Mammary epithelial cell (primary cell): ENCODE measurements at regions of chr21 and their contacts with region 1.

Region 1: GRCh38 chr21:38669176-38669575 is 136.6 kb upstream of the ETS2 start:
- DNase-seq: peak; percentile 20
- H3K4me3 ChIP-seq: no peak overlapping the region
- H3K27ac ChIP-seq: no peak overlapping the region
- H3K4me1 ChIP-seq: no peaks in the 10 kb centered on the region
- H3K27me3 ChIP-seq: no peaks in the 10 kb centered on the region
- CTCF ChIP-seq: peak; percentile 54 to 71

Region 2: DNA sequence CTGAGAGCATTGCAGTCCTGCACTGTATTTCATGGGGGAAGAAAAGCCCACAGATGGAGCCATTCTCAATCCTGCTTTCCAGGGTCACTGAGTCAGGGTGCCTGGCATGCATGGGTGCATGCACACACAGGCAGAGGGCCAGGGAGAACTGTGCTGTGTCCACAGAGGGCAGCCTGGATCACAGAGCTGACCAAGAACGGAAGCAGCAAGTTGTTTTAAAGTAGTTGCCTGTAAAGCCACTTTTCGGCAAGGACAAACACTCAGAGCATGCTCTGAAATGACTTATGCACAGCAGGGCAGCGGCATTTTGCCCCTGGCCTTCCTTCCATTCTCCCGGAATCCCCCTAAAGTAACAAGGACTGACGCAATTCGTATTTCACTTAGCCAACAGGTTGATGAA is 174.5 kb before region 1 on chr21:
- CTCF ChIA-PET with region 1: no interaction called
- dilution Hi-C with region 1: no loop called
- in situ Hi-C with region 1: no loop called
- intact Hi-C with region 1: no loop called
- DNase-seq: no peak
- H3K4me3 ChIP-seq: no peak overlapping the region
- H3K27ac ChIP-seq: no peak overlapping the region
- H3K4me1 ChIP-seq: peaks cover 6% of the 10 kb centered on the region
- H3K27me3 ChIP-seq: no peaks in the 10 kb centered on the region
- CTCF ChIP-seq: no peak

Region 3: GRCh38 chr21:38520511-38520910 is 148.7 kb before region 1 on chr21:
- CTCF ChIA-PET with region 1: no interaction called
- dilution Hi-C with region 1: no loop called
- in situ Hi-C with region 1: no loop called
- intact Hi-C with region 1: no loop called
- DNase-seq: no peak
- H3K4me3 ChIP-seq: no peak overlapping the region
- H3K27ac ChIP-seq: no peak overlapping the region
- H3K4me1 ChIP-seq: no peaks in the 10 kb centered on the region
- H3K27me3 ChIP-seq: peaks cover 6% of the 10 kb centered on the region
- CTCF ChIP-seq: no peak

Region 4: DNA sequence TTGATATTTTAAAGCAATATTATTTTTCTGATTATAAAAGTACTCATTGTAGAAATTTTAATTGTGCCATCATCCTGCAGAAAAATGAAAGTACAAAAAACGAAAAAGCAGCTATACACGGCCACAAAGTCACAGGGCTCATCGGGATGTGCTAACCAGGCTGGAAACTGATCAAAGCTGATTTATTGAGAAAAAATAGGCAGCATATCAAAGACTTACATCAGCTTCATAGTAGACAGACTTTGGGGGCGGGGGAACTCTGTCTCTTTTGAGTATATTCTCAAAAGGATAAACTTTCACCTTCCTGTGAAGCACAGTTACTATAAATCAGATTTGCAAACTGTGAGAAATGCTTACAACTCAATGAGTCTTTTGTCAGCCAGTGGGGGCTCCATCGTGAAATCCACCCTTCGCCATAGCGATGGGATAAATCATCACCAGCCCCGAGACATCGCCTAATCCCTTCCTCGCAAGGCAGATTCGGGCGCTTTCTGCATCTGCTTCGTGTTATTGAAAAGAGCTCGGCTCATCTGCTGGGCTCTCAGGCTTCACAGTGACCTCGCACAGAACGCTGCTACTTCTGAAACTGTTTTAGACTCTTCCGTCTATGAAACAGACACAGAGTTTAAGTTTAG is 101.7 kb before region 1 on chr21:
- CTCF ChIA-PET with region 1: no interaction called
- dilution Hi-C with region 1: loop called (anchors 5 kb)
- in situ Hi-C with region 1: no loop called
- intact Hi-C with region 1: no loop called
- DNase-seq: no peak
- H3K4me3 ChIP-seq: no peak overlapping the region
- H3K27ac ChIP-seq: no peak overlapping the region
- H3K4me1 ChIP-seq: no peaks in the 10 kb centered on the region
- H3K27me3 ChIP-seq: no peaks in the 10 kb centered on the region
- CTCF ChIP-seq: no peak

Region 5: DNA sequence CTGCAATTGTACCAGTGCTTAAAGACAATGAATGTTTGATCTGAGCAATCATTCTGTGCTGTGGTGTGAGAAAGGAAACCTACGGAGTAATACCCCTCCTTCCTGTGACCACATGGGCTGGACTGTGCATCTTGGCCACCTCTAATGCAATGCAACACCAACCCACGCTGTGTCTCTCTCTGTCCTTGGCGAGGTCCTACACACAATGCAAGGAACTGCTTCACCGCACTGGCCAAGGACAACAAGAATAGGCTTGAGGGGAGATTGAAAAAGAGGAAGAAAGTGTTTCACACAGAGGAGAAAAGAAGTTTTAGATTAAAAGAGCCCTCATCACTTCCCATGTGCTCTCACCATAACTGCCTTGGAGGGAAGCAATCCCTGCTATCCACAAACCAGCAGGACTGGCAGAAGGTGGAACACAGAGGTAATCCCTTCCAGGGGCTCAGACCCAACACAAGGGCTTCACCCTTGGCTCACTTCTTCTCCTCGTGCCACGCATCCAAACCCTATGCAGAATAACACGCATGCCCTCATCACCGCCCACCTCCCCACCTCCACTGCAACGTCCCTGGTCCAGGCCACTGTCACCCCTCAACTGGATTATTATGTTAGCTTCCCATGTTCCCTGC is 58.4 kb before region 1 on chr21:
- CTCF ChIA-PET with region 1: no interaction called
- dilution Hi-C with region 1: no loop called
- in situ Hi-C with region 1: no loop called
- intact Hi-C with region 1: no loop called
- DNase-seq: no peak
- H3K4me3 ChIP-seq: no peak overlapping the region
- H3K27ac ChIP-seq: no peak overlapping the region
- H3K4me1 ChIP-seq: no peaks in the 10 kb centered on the region
- H3K27me3 ChIP-seq: no peaks in the 10 kb centered on the region
- CTCF ChIP-seq: no peak

Region 6: GRCh38 chr21:38702196-38702595 is 33.0 kb after region 1 on chr21:
- CTCF ChIA-PET with region 1: no interaction called
- dilution Hi-C with region 1: loop called (anchors 5 kb)
- in situ Hi-C with region 1: no loop called
- intact Hi-C with region 1: no loop called
- DNase-seq: no peak
- H3K4me3 ChIP-seq: no peak overlapping the region
- H3K27ac ChIP-seq: no peak overlapping the region
- H3K4me1 ChIP-seq: no peaks in the 10 kb centered on the region
- H3K27me3 ChIP-seq: peaks cover 6% of the 10 kb centered on the region
- CTCF ChIP-seq: no peak

Region 7: DNA sequence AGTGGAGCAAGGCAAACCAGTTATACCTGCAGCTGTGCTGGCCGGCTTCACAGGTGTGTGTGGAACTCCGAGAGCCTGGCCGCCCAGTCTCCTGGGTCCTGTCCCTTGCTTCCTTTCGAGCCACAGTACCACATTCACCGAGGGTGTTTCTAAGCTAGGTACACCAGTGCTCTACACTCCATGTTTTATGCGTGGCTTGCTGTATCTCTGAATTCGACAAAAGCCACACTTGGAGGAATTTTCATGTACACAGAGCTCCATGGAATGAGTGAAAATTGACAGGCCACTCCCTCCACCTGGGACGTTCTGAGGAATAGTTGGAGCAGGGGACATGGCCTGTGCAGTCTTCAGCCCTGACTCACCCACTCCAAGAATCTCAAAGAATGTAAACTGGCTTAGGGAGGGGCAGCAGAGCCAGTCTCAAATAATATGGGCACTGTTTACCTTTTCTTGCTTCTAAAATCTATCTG is 150.6 kb after region 1 on chr21:
- CTCF ChIA-PET with region 1: no interaction called
- dilution Hi-C with region 1: no loop called
- in situ Hi-C with region 1: no loop called
- intact Hi-C with region 1: no loop called
- DNase-seq: peak; percentile 72
- H3K4me3 ChIP-seq: no peak overlapping the region
- H3K27ac ChIP-seq: peak overlapping the region; percentile 46
- H3K4me1 ChIP-seq: peaks cover 29% of the 10 kb centered on the region
- H3K27me3 ChIP-seq: no peaks in the 10 kb centered on the region
- CTCF ChIP-seq: no peak

Region 8: GRCh38 chr21:39137248-39138178 is 468.3 kb after region 1 on chr21:
- CTCF ChIA-PET with region 1: interaction called, 5 read pairs
- dilution Hi-C with region 1: no loop called
- in situ Hi-C with region 1: no loop called
- intact Hi-C with region 1: loop called (anchors 1 kb)
- DNase-seq: peak; percentile 51
- H3K4me3 ChIP-seq: no peak overlapping the region
- H3K27ac ChIP-seq: no peak overlapping the region
- H3K4me1 ChIP-seq: peaks cover 14% of the 10 kb centered on the region
- H3K27me3 ChIP-seq: no peaks in the 10 kb centered on the region
- CTCF ChIP-seq: peak; percentile 10 to 44